Endothelial cell of umbilical vein (primary cell): ENCODE measurements at regions of chr3 and their contacts with region 1.

Region 1: DNA sequence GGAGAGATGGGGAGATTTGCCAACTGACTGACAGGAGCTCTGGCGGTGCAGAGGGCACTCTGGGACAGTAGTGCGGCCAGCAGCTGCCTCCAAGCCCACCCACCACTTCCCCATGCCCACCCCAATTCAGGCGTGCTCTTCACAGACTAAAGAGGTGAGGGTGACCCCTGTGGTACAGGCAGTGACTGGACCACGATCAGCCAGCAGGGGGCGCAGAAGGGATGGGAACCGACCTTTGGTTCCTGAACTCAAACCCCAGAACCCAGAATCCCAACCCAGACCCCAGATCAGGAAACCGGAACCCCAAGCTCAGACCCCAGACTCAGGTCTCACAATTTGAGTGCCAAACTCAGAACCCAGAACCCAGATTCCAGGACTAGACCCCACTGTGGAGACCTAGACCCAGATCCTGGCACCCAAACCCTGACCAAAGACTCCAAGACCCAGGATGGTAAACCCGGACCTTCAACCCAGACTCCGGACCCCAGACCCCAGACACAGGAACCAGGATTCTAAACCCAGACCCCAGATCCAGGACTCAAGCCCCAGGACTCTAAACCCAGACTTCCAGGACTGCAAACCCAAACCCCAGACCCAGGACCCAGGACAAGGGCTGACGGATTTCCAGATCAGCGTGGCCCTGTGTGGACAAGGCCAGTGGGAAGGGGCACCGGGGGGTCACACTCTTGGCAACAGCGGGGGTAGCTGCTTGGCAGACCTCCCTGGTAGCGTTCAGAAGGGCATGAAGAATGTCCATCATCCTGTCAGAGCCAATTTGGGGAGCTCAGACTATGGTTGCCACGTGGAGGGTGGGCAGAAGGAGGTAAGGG is 3.7 kb upstream of the MYL3 start:
- DNase-seq: peak; percentile 38
- H3K4me3 ChIP-seq: no peak overlapping the region
- H3K27ac ChIP-seq: no peak overlapping the region
- H3K4me1 ChIP-seq: no peaks in the 10 kb centered on the region
- H3K27me3 ChIP-seq: no peaks in the 10 kb centered on the region
- CTCF ChIP-seq: peak; percentile 82 to 94
- POLR2A ChIP-seq: no peak

Region 2: DNA sequence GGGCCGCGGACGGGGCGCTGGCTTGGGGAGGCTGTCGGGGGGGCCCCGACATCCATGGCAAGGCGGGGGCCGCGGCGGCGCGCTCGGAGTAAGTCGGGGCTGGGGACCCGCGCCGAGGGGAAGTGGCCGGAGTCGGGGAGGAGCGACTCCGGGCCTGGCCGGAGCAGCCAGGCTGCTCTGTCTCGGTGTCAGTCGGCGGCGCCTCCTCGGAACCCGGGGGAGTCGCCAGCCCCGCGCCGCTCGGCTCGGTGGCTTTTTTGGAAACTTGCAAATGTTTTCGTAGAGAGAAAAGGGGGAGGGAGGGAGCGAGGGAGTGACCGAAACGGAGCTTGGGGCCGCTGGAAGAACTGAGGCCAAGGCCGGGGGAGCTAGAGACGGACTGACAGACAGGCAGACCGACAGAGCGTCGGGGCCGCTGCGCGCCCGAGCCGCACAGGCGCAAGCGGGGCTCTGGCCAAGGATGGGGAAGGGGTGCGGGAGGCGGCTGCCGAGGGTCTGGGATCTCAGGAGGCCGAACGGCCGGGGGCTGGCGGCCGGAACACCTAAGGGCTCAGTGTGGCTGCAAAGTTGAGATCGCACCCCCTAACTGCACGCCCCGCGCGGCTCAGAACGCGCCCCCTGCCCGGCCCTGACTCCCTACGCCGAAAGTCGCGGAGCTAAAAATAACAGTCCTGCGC is 15.6 kb after region 1 on chr3:
- CTCF ChIA-PET with region 1: interaction called, 4 read pairs
- POLR2A ChIA-PET with region 1: no interaction called
- dilution Hi-C with region 1: no loop called
- intact Hi-C with region 1: loop called (anchors 2 kb)
- DNase-seq: peak; percentile 26
- H3K4me3 ChIP-seq: peak overlapping the region; percentile 12 to 26 (median 21)
- H3K27ac ChIP-seq: no peak overlapping the region
- H3K4me1 ChIP-seq: no peaks in the 10 kb centered on the region
- H3K27me3 ChIP-seq: peaks cover 32 to 44% of the 10 kb centered on the region in 2 experiments
- CTCF ChIP-seq: no peak
- POLR2A ChIP-seq: no peak

Region 3: DNA sequence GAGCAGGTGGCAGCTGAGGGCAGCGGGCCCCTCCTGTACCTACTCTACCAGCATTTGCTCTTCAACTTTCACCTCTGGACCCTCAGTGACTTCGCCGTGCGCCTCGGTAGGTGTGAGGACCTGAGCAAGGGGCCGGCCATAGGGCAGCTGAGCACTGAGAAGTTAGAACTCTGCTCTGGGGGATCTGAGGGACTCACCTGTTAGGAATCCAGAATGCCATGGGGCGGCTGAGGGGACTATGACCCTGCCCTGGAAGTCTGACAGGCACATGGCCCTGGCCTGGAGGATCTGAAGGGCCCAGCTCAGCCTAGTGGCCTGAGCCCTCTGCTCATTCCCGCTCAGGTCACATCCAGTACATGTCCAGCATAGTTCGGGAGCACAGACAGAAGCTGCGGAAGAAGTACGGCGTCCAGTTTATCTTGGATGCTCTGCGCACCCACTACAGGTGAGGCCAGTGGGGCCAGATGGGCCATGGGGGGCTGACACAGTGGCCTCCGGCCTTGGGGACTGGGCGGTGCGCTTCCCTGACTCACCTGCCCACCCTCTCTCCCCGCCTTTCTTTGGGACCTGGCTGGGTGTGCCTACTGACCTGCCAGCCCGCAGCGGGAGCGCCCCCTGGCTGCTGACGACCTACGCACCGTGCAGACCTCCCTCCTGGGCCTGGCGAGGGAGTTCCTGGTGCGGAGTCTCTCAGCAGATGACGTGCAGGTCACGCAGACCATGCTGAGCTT is 131.4 kb after region 1 on chr3:
- CTCF ChIA-PET with region 1: interaction called, 3 read pairs
- POLR2A ChIA-PET with region 1: no interaction called
- dilution Hi-C with region 1: no loop called
- intact Hi-C with region 1: loop called (anchors 1 kb)
- DNase-seq: peak; percentile 48
- H3K4me3 ChIP-seq: no peak overlapping the region
- H3K27ac ChIP-seq: no peak overlapping the region
- H3K4me1 ChIP-seq: no peaks in the 10 kb centered on the region
- H3K27me3 ChIP-seq: no peaks in the 10 kb centered on the region
- CTCF ChIP-seq: peak; percentile 84 to 93
- POLR2A ChIP-seq: peak; percentile 29

Region 4: GRCh38 chr3:47035634-47036033 is 168.7 kb after region 1 on chr3:
- CTCF ChIA-PET with region 1: no interaction called
- POLR2A ChIA-PET with region 1: no interaction called
- dilution Hi-C with region 1: no loop called
- intact Hi-C with region 1: no loop called
- DNase-seq: peak; percentile 26
- H3K4me3 ChIP-seq: no peak overlapping the region
- H3K27ac ChIP-seq: no peak overlapping the region
- H3K4me1 ChIP-seq: no peaks in the 10 kb centered on the region
- H3K27me3 ChIP-seq: no peaks in the 10 kb centered on the region
- CTCF ChIP-seq: no peak
- POLR2A ChIP-seq: no peak

Region 5: GRCh38 chr3:47370887-47371697 is 504.2 kb after region 1 on chr3:
- CTCF ChIA-PET with region 1: no interaction called
- POLR2A ChIA-PET with region 1: no interaction called
- dilution Hi-C with region 1: no loop called
- intact Hi-C with region 1: loop called (anchors 5 kb)
- DNase-seq: no peak
- H3K4me3 ChIP-seq: no peak overlapping the region
- H3K27ac ChIP-seq: no peak overlapping the region
- H3K4me1 ChIP-seq: no peaks in the 10 kb centered on the region
- H3K27me3 ChIP-seq: no peaks in the 10 kb centered on the region
- CTCF ChIP-seq: peak in 1 of 2 donors; percentile 41
- POLR2A ChIP-seq: no peak